BJ (cell line): ENCODE measurements at regions of chr12 and their contacts with region 1.

Region 1: GRCh38 chr12:110176745-110177144 is 52.6 kb downstream of the IFT81 start:
- DNase-seq: no peak
- H3K4me3 ChIP-seq: no peak overlapping the region
- H3K27me3 ChIP-seq: no peaks in the 10 kb centered on the region
- CTCF ChIP-seq: no peak

Region 2: DNA sequence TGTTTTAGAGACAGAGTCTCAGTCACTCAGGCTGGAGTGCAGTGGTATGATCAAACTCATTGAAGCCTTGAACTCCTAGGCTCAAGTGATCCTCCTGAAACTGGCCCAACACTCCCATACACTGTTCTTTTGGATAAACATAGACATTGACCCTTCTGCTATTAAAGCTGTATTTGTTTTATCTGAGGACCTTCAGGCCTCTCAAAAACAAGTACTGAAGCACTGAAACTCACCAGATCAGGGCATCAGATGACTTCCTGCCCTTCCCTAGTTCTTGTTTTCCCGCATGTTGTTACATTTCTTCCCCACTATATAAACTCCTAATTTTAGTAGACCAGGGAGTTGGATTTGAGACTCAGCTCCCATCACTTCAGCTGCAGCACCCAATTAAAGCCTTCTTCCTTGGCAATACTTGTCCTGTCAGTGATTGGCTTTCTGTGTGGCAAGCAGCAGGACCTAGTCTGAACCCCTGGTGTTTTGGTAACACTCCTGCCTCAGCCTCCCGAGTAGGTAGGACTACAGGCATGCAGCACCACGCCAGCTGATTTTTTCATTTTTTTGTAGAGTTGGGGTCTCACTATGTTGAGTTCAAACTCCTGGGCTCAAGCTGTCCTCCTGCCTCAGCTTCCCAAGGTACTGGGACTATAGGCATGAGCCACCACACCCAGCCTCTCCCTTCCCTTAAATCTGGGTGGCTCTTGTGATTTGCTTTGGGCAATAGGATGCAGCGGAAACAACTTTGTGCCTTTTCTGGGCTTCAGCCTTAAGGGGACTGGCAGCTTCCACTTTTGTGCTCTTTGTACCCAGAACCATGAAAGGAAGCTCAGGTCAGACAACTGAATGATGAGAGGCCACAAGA is 65.0 kb before region 1 on chr12:
- CTCF ChIA-PET with region 1: interaction called, 4 read pairs
- POLR2A ChIA-PET with region 1: interaction called, 12 read pairs
- DNase-seq: no peak
- H3K4me3 ChIP-seq: no peak overlapping the region
- H3K27me3 ChIP-seq: no peaks in the 10 kb centered on the region
- CTCF ChIP-seq: no peak

Region 3: DNA sequence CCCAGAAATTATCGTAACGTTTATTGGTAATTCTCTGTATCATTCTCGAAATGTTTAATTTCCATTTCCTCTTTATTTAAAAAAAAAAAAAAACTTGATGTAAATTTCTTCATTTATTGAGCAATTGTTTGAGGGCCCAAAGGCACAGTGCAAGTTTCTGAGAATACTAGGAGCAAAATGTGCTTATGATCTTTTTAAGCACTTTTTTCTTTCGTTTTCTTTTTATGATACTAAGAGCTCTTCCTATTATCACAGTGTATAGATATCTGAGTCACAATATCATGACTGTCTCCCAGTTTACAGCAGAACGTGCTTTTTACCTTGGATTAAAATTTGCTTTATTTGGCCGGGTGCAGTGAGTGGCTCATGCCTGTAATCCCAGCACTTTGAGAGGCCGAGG is 109.9 kb after region 1 on chr12:
- CTCF ChIA-PET with region 1: no interaction called
- POLR2A ChIA-PET with region 1: interaction called, 12 read pairs
- DNase-seq: no peak
- H3K4me3 ChIP-seq: no peak overlapping the region
- H3K27me3 ChIP-seq: no peaks in the 10 kb centered on the region
- CTCF ChIP-seq: no peak